IMR-90 (cell line): ENCODE measurements at regions of chr2 and their contacts with region 1.

Region 1: DNA sequence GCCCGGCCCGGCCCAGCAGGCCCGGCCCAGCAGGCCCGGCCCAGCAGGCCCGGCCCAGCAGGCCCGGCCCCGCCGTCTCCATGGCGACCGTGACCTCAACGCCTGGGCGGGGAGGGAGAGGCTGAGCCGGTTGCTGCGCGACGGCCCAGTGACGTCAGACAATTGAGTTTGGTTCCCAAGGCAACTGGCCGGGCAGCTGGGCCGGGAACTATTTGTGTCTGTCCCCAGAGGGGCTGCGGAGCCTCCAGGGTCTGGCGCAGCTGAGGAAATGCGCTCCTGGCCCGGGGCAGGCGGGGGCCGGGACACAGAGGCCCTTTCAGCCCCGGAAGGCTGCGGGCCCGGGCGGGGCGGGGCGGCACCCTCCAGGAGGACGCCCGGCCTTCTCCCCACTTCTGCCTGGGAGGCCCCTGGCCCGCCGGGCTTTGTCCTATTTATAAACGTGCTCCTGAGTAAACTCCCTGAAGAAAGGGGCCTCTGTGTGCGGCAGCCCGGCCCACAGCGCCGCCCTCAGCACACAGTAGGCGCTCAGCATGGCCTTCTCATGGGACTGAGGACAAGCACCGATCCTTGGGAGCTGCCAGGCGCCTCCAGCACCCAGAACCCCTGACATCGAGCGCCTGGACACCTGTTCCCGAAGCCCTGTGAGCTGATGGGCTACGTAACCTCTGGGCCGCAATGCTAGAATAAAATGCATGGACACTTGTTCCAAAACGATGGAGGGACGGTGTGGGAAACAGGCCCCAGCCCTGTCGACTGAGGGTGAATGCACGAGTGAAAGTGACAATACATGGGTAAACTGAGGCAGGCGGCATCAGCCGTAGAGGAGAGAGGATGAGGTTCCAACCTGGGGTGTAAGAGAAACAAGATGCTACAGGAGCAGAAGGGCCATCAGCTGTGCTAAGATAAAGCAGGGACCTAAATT is 12.3 kb downstream of the TEX44 start:
- DNase-seq: peak; percentile 95
- ATAC-seq: peak; percentile 93
- H3K4me3 ChIP-seq: peak overlapping the region; percentile 42
- H3K27ac ChIP-seq: peak overlapping the region; percentile 67
- H3K4me1 ChIP-seq: peaks cover 11% of the 10 kb centered on the region
- H3K27me3 ChIP-seq: no peaks in the 10 kb centered on the region
- CTCF ChIP-seq: no peak
- POLR2A ChIP-seq: peak; percentile 91
- RAD21 ChIP-seq: peak; percentile 12; the same call in 1 of the 2 replicates

Region 2: DNA sequence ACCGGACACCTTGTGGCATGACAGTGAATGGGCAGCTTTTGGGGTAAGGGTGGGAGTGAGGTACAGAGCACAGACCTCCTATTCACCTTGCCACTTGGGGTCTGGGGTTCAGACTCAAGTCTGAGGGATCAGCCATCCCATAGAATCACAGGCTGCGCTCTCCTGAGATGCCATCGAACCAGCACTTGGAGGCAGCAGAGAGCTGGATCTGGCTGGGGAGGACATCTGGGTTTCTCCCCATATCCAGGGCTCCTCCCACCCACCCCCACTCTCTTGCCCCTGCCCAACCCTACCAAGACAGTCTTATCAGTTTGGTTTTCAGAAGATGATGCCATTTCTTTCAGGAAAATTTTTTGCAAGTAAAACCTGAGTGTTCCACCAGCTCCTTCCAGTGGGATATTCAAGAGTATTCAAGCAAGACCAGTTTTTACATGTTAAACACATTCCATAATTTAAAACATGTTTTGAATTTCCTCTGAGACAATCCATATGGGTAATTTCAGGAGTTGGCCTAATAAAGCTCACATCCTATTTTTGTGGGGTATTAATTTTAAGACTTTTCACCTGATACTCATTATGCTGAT is 41.5 kb before region 1 on chr2:
- CTCF ChIA-PET with region 1: interaction called, 13 read pairs
- POLR2A ChIA-PET with region 1: no interaction called
- dilution Hi-C with region 1: no loop called
- in situ Hi-C with region 1: no loop called
- intact Hi-C with region 1: loop called (anchors 1 kb)
- DNase-seq: peak; percentile 57
- ATAC-seq: peak; percentile 100
- H3K4me3 ChIP-seq: no peak overlapping the region
- H3K27ac ChIP-seq: no peak overlapping the region
- H3K4me1 ChIP-seq: no peaks in the 10 kb centered on the region
- H3K27me3 ChIP-seq: peaks cover 4% of the 10 kb centered on the region; the same call in 1 of the 2 replicates
- CTCF ChIP-seq: peak; percentile 80
- POLR2A ChIP-seq: no peak
- RAD21 ChIP-seq: peak; percentile 78